MCF 10A (cell line): ENCODE measurements at regions of chr13 and their contacts with region 1.

Region 1: DNA sequence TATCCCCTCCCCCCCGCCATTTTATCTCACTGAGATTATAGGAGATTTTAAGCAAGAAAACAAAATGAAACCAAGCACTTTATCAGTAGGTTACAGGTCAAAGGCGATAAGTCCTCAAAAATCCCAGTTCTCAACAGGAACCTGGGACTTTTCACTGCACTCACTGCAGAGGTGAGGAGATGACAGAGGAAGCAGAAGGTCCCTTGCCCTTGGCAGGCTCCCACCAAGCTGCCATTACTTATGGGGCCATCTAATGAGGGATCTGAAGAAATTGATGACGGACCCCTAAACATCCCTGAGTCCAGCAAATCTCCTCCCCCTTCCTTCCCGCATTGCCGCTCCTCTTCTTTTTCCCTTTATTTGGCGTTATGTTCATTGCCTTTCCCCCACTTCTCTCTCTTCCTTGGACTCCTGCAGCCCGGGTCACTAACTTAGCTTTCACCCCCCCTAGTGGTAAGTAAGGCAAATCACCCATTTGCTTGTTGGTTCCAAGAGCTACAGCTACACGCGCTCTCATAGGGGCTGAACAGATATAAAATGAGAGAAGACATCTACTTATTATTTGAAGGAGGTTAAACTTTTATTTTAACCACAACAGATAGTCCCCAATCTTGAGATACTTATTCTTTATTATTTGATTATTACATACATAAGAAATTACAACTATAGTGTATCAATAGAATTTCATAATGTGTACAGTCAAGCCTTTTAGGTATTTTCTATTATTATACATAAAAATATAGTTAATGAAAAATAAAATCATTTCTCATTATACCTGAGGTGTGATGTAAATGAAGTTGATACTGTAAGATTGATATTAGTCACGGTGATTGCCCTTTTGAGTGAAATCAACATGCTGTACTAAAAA is 52.0 kb upstream of the ARGLU1 start:
- DNase-seq: peak; percentile 77
- H3K4me3 Mint-ChIP-seq: peak overlapping the region; percentile 8
- H3K27ac Mint-ChIP-seq: no peak overlapping the region
- H3K4me1 Mint-ChIP-seq: peaks cover 14% of the 10 kb centered on the region
- H3K27me3 Mint-ChIP-seq: peaks cover 31% of the 10 kb centered on the region
- CTCF ChIP-seq: peak; percentile 56

Region 2: GRCh38 chr13:106633321-106633720 is 13.4 kb after region 1 on chr13:
- CTCF ChIA-PET with region 1: interaction called, 44 read pairs
- POLR2A ChIA-PET with region 1: interaction called, 6 read pairs
- intact Hi-C with region 1: no loop called
- DNase-seq: no peak
- H3K4me3 Mint-ChIP-seq: no peak overlapping the region
- H3K27ac Mint-ChIP-seq: no peak overlapping the region
- H3K4me1 Mint-ChIP-seq: no peaks in the 10 kb centered on the region
- H3K27me3 Mint-ChIP-seq: peaks cover 19% of the 10 kb centered on the region
- CTCF ChIP-seq: no peak

Region 3: GRCh38 chr13:107124129-107124718 is 504.3 kb after region 1 on chr13:
- CTCF ChIA-PET with region 1: no interaction called
- POLR2A ChIA-PET with region 1: no interaction called
- intact Hi-C with region 1: loop called (anchors 1 kb)
- DNase-seq: peak; percentile 45
- H3K4me3 Mint-ChIP-seq: no peak overlapping the region
- H3K27ac Mint-ChIP-seq: no peak overlapping the region
- H3K4me1 Mint-ChIP-seq: peaks cover 6% of the 10 kb centered on the region
- H3K27me3 Mint-ChIP-seq: no peaks in the 10 kb centered on the region
- CTCF ChIP-seq: peak; percentile 58